Activated B cell treated with CpG ODN at 0.5 μM for 24 hours (primary cell): ENCODE measurements at regions of chr19 and their contacts with region 1.

Region 1: DNA sequence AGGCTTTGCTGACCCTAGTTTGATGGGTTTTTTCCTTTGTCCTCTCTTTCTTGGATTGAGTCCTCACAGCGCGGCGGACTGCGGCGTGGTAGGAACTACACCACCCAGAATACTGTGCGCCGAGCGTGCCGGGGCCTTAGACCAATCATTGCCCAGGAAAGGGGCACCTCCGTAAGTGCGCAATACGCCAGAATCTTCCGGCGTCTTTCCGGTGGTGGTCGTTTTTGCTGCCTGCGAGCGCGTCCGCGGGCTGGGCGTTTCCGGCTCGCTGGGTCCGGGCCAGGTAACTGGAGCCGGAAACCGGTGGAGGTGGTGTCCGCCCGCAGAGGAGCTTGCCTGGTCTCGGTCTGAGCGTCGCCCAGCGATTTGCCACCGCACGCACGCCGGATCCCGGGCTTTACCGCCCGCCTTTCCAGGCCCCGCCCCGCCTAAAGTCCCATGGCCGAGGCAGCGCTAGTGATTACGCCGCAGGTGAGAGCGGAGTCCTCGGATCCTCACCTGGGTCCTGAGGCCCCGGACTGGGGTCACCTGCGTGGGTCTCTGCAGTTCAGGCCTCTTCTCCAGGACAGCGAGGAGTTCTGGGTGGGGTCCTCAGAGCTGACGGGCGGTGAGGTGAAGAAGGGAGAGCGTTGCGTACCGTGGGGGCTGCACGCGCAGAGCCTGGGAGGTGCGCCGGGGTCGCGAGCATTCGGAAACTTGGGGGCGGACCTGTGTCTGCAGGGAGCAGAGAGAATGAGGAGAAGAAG is at the start of gene ZNF549:
- DNase-seq: peak; percentile 78
- ATAC-seq: peak; percentile 99
- H3K4me3 Mint-ChIP-seq: peak within 1 kb of the TSS; percentile 96
- H3K27ac Mint-ChIP-seq: peak within 1 kb of the TSS; percentile 88
- H3K4me1 Mint-ChIP-seq: peaks cover 24% of the 10 kb centered on the region
- H3K27me3 Mint-ChIP-seq: no peaks in the 10 kb centered on the region
- CTCF ChIP-seq: no peak
- total RNA-seq, gene ZNF549: 14.0 and 16.9 TPM in 2 replicates

Region 2: DNA sequence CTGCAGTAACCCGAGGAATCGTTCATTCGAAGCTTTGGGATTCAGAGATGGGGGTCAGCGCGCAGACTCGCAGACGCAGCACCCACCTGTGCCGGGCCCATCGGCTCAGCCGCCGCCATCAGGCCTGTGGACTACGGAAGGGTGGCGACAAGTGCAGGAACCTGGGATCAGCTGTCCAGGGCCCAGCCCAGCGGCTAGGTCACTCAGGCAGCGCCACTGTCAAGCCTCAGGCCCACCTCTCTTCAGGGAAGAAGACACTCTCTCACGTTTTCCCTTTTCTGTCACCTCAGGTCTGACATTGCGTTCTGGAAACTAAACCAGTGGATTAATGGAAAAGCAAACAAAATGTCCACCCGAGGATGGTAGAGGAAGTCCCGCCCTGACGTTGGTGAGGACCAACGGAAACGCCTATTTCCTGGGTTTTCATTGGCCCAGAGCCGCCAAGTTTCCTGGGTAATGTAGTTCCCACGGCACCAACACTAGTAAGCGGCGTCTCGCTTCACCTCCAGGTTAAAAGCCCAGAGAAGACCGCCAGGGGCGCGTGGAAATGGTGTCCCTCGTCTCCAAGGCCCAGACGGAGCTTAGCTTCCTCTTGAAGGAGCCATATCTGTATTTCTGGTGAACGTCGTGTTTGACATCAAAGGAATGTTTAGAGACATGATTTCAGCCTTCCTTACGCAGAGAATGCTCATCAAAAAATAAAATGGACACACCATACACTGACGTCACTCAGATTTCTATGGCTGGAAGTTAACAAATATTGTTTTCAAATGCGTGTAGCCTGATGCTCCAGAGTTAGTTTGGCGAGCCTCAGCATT is 49.9 kb before region 1 on chr19 and contains the start of gene ZNF772:
- CTCF ChIA-PET with region 1: no interaction called
- POLR2A ChIA-PET with region 1: no interaction called
- intact Hi-C with region 1: loop called (anchors 1 kb)
- DNase-seq: peak; percentile 68
- ATAC-seq: peak; percentile 98
- H3K4me3 Mint-ChIP-seq: peak within 1 kb of the TSS; percentile 91
- H3K27ac Mint-ChIP-seq: peak within 1 kb of the TSS; percentile 90
- H3K4me1 Mint-ChIP-seq: peaks cover 29% of the 10 kb centered on the region
- H3K27me3 Mint-ChIP-seq: no peaks in the 10 kb centered on the region
- CTCF ChIP-seq: no peak
- total RNA-seq, gene ZNF772: 13.8 and 17.9 TPM in 2 replicates

Region 3: GRCh38 chr19:57559404-57560025 is 32.2 kb after region 1 on chr19 and contains the start of gene ZNF550:
- CTCF ChIA-PET with region 1: no interaction called
- POLR2A ChIA-PET with region 1: no interaction called
- intact Hi-C with region 1: loop called (anchors 1 kb)
- DNase-seq: peak; percentile 83
- ATAC-seq: peak; percentile 98
- H3K4me3 Mint-ChIP-seq: peak within 1 kb of the TSS; percentile 92
- H3K27ac Mint-ChIP-seq: peak within 1 kb of the TSS; percentile 69
- H3K4me1 Mint-ChIP-seq: peaks cover 33% of the 10 kb centered on the region
- H3K27me3 Mint-ChIP-seq: no peaks in the 10 kb centered on the region
- CTCF ChIP-seq: no peak
- total RNA-seq, gene ZNF550: 16.8 and 18.7 TPM in 2 replicates

Region 4: GRCh38 chr19:57606931-57607330 is 79.6 kb after region 1 on chr19:
- CTCF ChIA-PET with region 1: no interaction called
- POLR2A ChIA-PET with region 1: no interaction called
- intact Hi-C with region 1: no loop called
- DNase-seq: no peak
- ATAC-seq: no peak
- H3K4me3 Mint-ChIP-seq: no peak overlapping the region
- H3K27ac Mint-ChIP-seq: no peak overlapping the region
- H3K4me1 Mint-ChIP-seq: no peaks in the 10 kb centered on the region
- H3K27me3 Mint-ChIP-seq: no peaks in the 10 kb centered on the region
- CTCF ChIP-seq: no peak

Region 5: GRCh38 chr19:57719901-57720519 is 192.7 kb after region 1 on chr19:
- CTCF ChIA-PET with region 1: no interaction called
- POLR2A ChIA-PET with region 1: no interaction called
- intact Hi-C with region 1: no loop called
- DNase-seq: no peak
- ATAC-seq: no peak
- H3K4me3 Mint-ChIP-seq: no peak overlapping the region
- H3K27ac Mint-ChIP-seq: no peak overlapping the region
- H3K4me1 Mint-ChIP-seq: peaks cover 11% of the 10 kb centered on the region
- H3K27me3 Mint-ChIP-seq: no peaks in the 10 kb centered on the region
- CTCF ChIP-seq: no peak